ENCODE measurements at regions of chr6 and their contacts with region 1.

Region 1: DNA sequence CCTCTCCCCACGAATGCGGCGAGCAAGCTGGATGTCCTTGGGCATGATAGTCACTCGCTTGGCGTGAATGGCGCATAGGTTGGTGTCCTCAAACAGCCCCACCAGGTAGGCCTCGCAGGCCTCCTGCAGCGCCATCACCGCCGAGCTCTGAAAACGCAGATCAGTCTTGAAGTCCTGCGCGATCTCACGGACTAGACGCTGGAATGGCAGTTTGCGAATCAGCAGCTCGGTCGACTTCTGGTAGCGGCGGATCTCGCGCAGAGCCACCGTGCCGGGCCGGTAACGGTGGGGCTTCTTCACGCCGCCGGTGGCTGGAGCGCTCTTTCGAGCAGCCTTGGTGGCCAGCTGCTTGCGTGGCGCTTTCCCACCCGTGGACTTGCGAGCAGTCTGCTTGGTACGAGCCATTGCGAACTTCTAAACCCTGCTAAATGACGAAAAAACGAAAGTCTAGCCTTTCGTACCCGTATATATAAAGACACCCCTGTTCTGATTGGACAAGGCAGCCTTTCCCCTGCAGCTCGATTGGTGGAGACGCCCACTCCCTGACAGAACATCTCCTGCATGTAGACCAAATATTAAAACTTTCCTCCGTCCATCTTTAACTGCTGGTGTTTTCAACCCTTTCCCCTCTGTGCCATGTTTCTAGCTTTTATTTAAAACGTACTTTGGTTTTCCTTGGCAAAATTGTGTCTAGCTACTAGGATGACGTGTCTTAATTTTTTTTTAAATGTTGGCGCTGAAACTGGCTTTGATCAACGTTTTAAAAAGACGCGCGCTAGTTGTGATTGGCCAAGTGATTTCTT is 109.8 kb downstream of the HFE start:
- DNase-seq: peak; percentile 55 to 95 (median 86)
- ATAC-seq: peak; percentile 57 to 62
- H3K4me3 Mint-ChIP-seq: peak overlapping the region; percentile 88 to 99 (median 96)
- H3K27ac Mint-ChIP-seq: peak overlapping the region; percentile 94 to 99 (median 98)
- H3K4me1 Mint-ChIP-seq: peaks cover 25 to 46% (median 42%) of the 10 kb centered on the region in 4 donors
- H3K27me3 Mint-ChIP-seq: no peaks in the 10 kb centered on the region

Region 2: DNA sequence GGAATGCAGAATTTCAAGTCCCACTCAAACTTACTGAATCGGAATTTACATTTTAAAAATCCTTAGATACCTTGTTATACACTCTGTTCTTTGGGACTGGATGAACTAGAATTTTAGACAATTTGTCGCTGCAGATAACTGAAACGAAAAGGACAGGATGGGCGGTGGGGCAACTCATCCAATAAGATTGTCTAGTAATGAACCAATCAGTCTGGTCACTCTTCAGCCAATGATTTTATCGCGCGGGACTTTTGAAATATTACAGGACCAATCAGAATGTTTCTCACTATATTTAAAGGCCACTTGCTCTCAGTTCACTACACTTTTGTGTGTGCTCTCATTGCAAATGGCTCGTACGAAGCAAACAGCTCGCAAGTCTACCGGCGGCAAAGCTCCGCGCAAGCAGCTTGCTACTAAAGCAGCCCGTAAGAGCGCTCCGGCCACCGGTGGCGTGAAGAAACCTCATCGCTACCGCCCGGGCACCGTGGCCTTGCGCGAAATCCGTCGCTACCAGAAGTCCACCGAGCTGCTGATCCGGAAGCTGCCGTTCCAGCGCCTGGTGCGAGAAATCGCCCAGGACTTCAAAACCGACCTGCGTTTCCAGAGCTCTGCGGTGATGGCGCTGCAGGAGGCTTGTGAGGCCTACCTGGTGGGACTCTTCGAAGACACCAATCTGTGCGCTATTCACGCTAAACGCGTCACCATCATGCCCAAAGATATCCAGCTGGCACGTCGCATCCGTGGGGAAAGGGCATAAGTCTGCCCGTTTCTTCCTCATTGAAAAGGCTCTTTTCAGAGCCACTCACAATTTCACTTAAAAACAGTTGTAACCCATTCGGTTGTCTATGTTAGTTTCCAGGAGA is 151.8 kb before region 1 on chr6:
- POLR2A ChIA-PET with region 1: interaction called, 93 read pairs
- DNase-seq: peak; percentile 45 to 95 (median 86)
- ATAC-seq: peak; percentile 58 to 63
- H3K4me3 Mint-ChIP-seq: peak overlapping the region; percentile 90 to 97 (median 92)
- H3K27ac Mint-ChIP-seq: peak overlapping the region; percentile 90 to 99 (median 96)
- H3K4me1 Mint-ChIP-seq: peaks cover 8 to 28% (median 14%) of the 10 kb centered on the region in 4 donors
- H3K27me3 Mint-ChIP-seq: no peaks in the 10 kb centered on the region

Region 3: DNA sequence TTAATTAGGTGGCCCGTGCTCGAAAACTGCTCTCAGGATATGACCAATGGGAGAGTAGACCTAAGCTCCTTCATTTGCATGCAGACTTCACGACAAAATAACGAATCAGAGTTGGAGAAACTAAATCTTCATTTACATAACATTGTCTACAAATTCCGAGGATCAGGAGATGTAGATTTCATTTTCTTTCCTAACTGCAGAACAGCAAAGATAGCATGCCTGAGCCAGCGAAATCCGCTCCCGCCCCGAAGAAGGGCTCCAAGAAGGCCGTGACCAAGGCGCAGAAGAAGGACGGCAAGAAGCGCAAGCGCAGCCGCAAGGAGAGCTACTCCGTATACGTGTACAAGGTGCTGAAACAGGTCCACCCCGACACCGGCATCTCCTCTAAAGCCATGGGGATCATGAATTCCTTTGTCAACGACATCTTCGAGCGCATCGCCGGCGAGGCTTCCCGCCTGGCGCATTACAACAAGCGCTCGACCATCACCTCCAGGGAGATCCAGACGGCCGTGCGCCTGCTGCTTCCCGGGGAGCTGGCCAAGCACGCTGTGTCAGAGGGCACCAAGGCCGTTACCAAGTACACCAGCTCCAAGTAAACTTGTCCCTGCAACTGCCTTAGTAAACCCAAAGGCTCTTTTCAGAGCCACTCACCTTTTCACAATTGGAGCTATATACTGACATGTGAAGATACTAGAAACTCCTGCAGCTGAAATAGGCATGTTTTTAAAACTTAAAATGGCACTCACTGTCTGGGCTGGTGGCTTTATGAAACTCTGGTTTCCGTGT is 13.3 kb before region 1 on chr6:
- POLR2A ChIA-PET with region 1: interaction called, 578 read pairs
- DNase-seq: peak; percentile 22 to 82 (median 58)
- ATAC-seq: peak; percentile 92 to 94
- H3K4me3 Mint-ChIP-seq: peak overlapping the region; percentile 93 to 100 (median 98)
- H3K27ac Mint-ChIP-seq: peak overlapping the region; percentile 70 to 98 (median 95)
- H3K4me1 Mint-ChIP-seq: peaks cover 27 to 48% (median 46%) of the 10 kb centered on the region in 4 donors
- H3K27me3 Mint-ChIP-seq: no peaks in the 10 kb centered on the region

Region 4: DNA sequence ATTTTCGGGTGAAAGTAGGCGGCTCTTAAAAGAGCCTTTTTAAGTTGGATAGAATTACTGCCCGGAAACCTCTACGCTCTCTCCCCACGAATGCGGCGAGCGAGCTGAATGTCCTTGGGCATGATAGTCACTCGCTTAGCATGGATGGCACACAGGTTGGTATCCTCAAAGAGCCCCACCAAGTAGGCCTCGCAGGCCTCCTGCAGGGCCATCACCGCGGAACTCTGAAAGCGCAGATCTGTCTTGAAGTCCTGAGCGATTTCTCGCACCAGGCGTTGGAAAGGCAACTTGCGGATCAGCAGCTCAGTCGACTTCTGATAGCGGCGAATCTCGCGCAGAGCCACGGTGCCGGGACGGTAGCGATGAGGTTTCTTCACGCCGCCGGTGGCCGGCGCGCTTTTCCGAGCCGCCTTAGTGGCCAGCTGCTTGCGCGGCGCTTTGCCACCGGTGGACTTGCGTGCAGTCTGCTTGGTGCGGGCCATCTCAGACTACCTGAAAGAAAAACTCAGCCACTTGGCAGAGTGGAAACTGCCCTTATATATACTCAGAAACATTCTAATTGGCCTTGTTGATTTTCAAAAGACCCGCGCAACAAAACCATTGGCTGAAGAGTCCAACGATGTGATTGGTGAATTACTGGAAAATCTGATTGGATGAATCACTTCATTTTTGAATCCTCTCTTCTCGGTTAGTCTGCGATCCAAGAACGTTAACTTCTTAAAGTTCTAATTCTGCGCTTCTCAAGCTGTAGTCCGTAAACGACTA is 74.0 kb after region 1 on chr6:
- POLR2A ChIA-PET with region 1: interaction called, 218 read pairs
- DNase-seq: peak; percentile 52 to 93 (median 81)
- ATAC-seq: peak; percentile 18 to 39
- H3K4me3 Mint-ChIP-seq: no peak overlapping the region
- H3K27ac Mint-ChIP-seq: peak overlapping the region in 4 of 10 donors; percentile 20 to 97 (median 40)
- H3K4me1 Mint-ChIP-seq: peaks cover 4 to 28% (median 11%) of the 10 kb centered on the region in 4 donors
- H3K27me3 Mint-ChIP-seq: no peaks in the 10 kb centered on the region

Region 5: DNA sequence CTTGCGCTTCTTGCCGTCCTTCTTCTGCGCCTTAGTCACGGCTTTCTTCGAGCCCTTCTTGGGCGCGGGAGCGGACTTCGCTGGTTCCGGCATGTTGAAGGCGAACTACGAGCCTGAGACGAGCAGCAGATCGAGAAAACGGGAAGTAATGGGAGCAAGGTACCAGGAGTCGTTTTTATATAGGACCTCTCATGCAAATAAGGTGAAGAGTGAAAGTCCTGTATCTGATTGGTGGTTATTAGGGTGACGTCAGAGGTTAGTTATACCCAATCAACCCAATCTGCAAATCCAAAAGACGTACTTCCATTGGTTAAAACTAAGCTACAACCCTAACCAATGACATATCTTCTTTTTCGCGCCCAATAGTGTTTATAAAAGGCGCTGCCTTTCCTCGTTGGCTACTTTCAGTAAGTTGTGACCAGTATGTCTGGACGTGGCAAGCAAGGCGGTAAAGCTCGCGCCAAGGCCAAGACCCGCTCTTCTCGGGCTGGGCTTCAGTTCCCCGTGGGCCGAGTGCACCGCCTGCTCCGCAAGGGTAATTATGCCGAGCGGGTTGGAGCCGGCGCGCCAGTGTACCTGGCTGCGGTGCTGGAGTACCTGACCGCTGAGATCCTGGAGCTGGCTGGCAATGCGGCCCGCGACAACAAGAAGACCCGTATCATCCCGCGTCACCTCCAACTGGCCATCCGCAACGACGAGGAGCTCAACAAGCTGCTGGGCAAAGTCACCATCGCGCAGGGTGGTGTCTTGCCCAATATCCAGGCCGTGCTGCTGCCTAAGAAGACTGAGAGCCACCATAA is 949.9 kb after region 1 on chr6:
- POLR2A ChIA-PET with region 1: interaction called, 35 read pairs
- DNase-seq: peak; percentile 37 to 94 (median 82)
- ATAC-seq: peak; percentile 85 to 88
- H3K4me3 Mint-ChIP-seq: no peak overlapping the region
- H3K27ac Mint-ChIP-seq: no peak overlapping the region
- H3K4me1 Mint-ChIP-seq: peaks cover 3 to 25% (median 12%) of the 10 kb centered on the region in 4 donors
- H3K27me3 Mint-ChIP-seq: no peaks in the 10 kb centered on the region

Region 6: DNA sequence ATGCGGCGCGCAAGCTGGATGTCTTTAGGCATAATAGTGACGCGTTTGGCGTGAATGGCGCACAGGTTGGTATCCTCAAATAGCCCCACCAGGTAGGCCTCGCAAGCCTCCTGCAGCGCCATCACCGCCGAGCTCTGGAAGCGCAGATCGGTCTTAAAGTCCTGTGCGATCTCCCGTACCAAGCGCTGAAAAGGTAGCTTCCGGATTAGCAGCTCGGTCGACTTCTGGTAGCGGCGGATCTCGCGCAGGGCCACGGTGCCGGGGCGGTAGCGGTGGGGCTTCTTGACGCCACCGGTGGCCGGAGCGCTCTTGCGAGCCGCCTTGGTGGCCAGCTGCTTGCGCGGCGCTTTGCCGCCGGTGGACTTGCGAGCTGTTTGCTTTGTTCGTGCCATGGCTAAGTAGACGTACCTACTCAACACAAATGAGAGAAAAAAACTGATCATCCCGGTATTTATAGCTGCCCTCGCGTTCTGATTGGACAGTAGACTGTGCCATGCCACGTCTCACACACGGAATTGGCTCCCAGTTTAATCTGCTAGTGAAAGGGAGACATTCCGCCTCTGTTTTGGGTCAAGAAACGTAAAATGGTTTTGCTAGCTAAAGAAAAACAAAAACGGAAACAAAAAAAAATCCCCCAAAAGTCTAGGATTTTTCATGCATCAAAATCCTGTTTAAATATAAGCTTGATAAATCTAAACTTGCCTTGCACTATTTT is 1675.0 kb after region 1 on chr6:
- POLR2A ChIA-PET with region 1: interaction called, 31 read pairs
- DNase-seq: peak; percentile 57 to 99 (median 91)
- ATAC-seq: peak; percentile 78 to 79
- H3K4me3 Mint-ChIP-seq: peak overlapping the region; percentile 86 to 95 (median 92)
- H3K27ac Mint-ChIP-seq: peak overlapping the region; percentile 89 to 99 (median 96)
- H3K4me1 Mint-ChIP-seq: peaks cover 21 to 46% (median 38%) of the 10 kb centered on the region in 4 donors
- H3K27me3 Mint-ChIP-seq: no peaks in the 10 kb centered on the region

Measured in naive thymus-derived CD8-positive, alpha-beta T cell (primary cell).